ENCODE measurements at regions of chr1 and their contacts with region 1.

Region 1: DNA sequence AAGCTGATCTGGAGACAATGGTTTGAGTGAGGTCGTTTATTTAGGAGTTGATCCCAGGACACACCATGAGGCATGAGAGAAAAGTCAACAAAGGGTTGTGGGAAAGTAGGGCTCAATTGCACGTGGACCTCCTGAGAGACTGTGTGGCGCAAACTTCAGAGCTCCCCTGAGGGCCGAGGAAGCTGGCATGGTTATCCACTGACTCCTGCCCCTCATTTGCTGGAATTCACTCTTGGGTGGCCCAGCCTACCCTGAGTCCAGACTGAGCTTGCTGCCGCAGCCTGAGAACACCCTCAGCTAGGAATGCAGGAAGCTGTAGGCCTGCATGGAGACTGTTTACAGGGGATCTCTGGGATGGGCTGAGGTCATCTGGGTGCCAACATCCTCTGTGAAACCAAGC is 301.0 kb downstream of the RWDD3 start:
- DNase-seq: no peak
- ATAC-seq: no peak

Region 2: GRCh38 chr1:95615421-95615820 is 80.4 kb after region 1 on chr1:
- intact Hi-C with region 1: loop called (anchors 2 kb)
- DNase-seq: no peak
- ATAC-seq: no peak